ENCODE measurements at regions of chr16 and their contacts with region 1.

Region 1: DNA sequence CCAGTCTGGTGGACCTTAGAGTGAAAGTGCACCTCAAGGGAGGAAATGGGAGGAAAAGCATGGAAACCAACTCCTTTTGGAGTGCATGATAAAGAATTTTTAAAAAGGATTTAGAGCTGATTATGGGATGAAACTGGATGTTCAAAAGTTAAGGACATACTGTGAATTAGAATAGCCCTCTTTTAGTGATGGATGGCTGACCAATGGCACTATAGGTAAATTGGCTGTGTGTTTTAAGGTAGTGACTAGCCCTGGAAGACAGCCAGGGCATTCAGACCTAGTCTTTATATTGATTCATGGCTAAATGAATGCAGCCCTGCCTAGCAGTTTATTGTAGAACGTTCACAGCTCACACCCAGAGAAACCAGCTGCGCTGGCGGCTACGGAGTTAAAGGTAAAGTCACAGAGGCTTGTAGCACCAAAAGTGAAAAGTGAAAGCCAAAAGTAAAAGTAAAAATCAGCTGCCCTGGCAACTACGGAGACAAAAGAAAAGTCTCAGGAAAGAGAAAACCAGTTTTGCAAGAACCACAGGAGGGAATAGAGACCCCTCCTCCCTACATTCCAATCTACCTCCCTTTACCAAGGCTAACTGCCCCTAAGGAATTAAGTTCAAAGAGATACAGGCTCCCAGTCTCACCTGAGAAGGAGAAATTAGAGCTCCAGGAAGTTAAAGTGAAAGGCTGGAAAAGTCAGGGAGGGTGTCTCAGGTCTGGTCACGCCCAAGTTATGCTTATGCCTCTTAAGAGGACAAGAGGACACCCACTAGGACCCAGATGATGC is 21.8 kb downstream of the ACSM1 start:
- DNase-seq: peak; percentile 79 to 80
- H3K4me3 ChIP-seq: no peak overlapping the region
- H3K27ac ChIP-seq: peak overlapping the region; percentile 69 to 80 (median 80)
- H3K4me1 ChIP-seq: peaks cover 50 to 51% of the 10 kb centered on the region in 2 donors
- H3K27me3 ChIP-seq: no peaks in the 10 kb centered on the region
- CTCF ChIP-seq: no peak
- POLR2A ChIP-seq: peak in 1 of 2 donors; percentile 27

Region 2: DNA sequence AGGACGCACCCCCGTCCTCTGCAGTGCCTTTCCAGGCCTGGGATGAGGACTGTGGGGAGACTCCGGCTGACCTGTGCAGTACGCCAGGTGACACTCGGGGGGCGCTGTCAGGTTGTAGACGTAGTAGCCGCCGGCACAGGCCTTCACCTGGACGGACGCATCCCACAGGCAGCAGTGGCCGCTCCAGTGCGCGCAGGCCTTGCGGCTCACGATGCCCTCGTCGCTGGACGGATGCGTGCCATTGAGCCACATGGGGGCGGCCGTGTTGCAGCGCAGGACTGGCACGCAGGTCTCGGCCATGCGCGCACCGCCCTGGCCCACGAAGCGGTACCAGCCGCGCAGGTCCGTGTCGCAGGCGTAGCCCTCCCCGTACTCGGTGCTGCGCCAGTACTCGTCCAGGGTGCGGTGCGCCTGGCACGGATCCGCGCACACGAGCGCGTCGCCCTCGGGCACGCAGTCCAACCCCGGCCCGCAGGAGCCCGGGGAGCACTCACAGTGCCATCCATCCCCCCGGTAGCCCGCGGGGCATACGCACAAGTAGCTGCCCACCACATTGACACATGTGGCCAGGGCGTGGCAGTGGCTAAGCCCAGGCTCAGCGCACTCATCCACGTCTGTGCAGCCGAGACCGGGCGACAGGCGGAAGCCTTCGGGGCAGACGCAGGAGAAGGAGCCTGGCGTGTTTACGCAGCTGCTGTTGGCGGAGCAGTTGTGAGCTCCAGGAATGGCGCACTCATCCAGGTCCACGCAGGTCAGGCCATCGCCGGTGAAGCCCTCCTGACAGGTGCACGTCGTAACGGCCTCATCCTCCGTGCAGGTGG is 327.1 kb before region 1 on chr16:
- intact Hi-C with region 1: no loop called
- DNase-seq: no peak
- H3K4me3 ChIP-seq: no peak overlapping the region
- H3K27ac ChIP-seq: no peak overlapping the region
- H3K4me1 ChIP-seq: no peaks in the 10 kb centered on the region
- H3K27me3 ChIP-seq: no peaks in the 10 kb centered on the region
- CTCF ChIP-seq: no peak
- POLR2A ChIP-seq: no peak

Region 3: GRCh38 chr16:20611975-20612481 is 63.6 kb before region 1 on chr16:
- intact Hi-C with region 1: loop called (anchors 10 kb)
- DNase-seq: peak; percentile 68 to 74
- H3K4me3 ChIP-seq: no peak overlapping the region
- H3K27ac ChIP-seq: peak overlapping the region; percentile 39 to 74 (median 67)
- H3K4me1 ChIP-seq: peaks cover 34 to 52% of the 10 kb centered on the region in 2 donors
- H3K27me3 ChIP-seq: no peaks in the 10 kb centered on the region
- CTCF ChIP-seq: no peak
- POLR2A ChIP-seq: no peak

Region 4: GRCh38 chr16:20707461-20707860 is 31.8 kb after region 1 on chr16:
- intact Hi-C with region 1: no loop called
- DNase-seq: peak; percentile 16 to 38
- H3K4me3 ChIP-seq: no peak overlapping the region
- H3K27ac ChIP-seq: no peak overlapping the region
- H3K4me1 ChIP-seq: peaks cover 0 to 4% of the 10 kb centered on the region in 2 donors
- H3K27me3 ChIP-seq: no peaks in the 10 kb centered on the region
- CTCF ChIP-seq: no peak
- POLR2A ChIP-seq: no peak

Region 5: GRCh38 chr16:20735490-20735889 is 59.8 kb after region 1 on chr16:
- intact Hi-C with region 1: loop called (anchors 10 kb)
- DNase-seq: no peak
- H3K4me3 ChIP-seq: no peak overlapping the region
- H3K27ac ChIP-seq: no peak overlapping the region
- H3K4me1 ChIP-seq: peaks cover 8 to 24% of the 10 kb centered on the region in 2 donors
- H3K27me3 ChIP-seq: no peaks in the 10 kb centered on the region
- CTCF ChIP-seq: no peak
- POLR2A ChIP-seq: no peak

Measured in thyroid gland (tissue), 4 donors.